ENCODE measurements at regions of chr3 and their contacts with region 1.

Region 1: DNA sequence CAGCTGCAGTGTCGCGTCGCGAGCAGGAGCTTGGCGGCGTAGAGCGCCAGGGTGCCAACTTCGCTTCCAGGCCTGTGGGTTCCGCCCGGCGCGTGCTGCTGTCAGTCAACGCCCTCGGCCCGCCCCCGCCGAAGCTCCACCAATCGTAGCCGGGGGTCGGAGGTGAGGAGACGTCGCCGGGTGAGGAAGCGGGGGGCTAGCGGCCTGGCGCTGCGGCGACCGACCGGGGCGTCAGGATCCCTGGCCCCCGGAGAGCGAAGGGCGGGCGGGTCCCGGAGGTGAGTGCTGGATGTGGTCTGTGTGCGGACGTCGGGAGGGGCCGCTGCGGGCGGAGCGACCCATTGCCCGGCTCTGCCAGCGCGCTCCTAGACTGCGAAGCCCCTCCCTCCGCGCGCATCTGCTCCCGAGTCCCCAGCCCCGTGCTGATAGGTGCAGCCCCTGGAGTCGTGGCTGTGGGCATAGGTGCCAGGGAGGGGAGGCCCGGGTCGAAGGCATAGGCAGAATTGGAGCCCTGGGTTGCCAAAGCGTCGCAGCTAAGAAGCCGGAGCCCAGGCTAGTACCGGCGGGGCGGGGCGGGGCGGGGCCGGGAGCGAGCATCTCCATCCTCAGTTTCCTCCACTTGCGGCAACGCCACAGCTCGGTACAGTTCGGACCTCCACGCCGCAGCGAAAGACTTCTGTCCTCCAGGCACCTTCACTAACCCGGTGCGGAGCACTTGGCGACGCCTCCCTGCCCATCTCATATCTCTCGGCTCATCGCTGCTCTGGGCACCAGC is at the start of gene NXPE3:
- DNase-seq: peak; percentile 92 to 95 (median 94)
- H3K4me3 ChIP-seq: peak within 1 kb of the TSS; percentile 63 to 90
- H3K4me3 Mint-ChIP-seq: peak within 1 kb of the TSS; percentile 89 to 98 (median 96)
- H3K27ac ChIP-seq: peak within 1 kb of the TSS; percentile 91
- H3K27ac Mint-ChIP-seq: peak within 1 kb of the TSS; percentile 97 to 99 (median 99)
- H3K4me1 ChIP-seq: peaks cover 49% of the 10 kb centered on the region
- H3K4me1 Mint-ChIP-seq: peaks cover 35 to 62% (median 47%) of the 10 kb centered on the region in 4 donors
- H3K27me3 ChIP-seq: no peaks in the 10 kb centered on the region
- H3K27me3 Mint-ChIP-seq: no peaks in the 10 kb centered on the region
- total RNA-seq, gene NXPE3: 35.7 to 37.2 TPM

Region 2: GRCh38 chr3:101676765-101677435 is 102.3 kb before region 1 on chr3 and contains the start of gene ZBTB11:
- CTCF ChIA-PET with region 1: no interaction called
- POLR2A ChIA-PET with region 1: interaction called, 26 read pairs
- intact Hi-C with region 1: loop called (anchors 1 kb)
- DNase-seq: peak; percentile 99 to 100 (median 99)
- H3K4me3 ChIP-seq: peak within 1 kb of the TSS; percentile 78 to 94
- H3K4me3 Mint-ChIP-seq: peak within 1 kb of the TSS; percentile 92 to 99 (median 96)
- H3K27ac ChIP-seq: peak within 1 kb of the TSS; percentile 98
- H3K27ac Mint-ChIP-seq: peak within 1 kb of the TSS; percentile 97 to 99 (median 98)
- H3K4me1 ChIP-seq: peaks cover 44% of the 10 kb centered on the region
- H3K4me1 Mint-ChIP-seq: peaks cover 23 to 73% (median 41%) of the 10 kb centered on the region in 4 donors
- H3K27me3 ChIP-seq: no peaks in the 10 kb centered on the region
- H3K27me3 Mint-ChIP-seq: peaks cover 0 to 2% of the 10 kb centered on the region in 2 donors
- total RNA-seq, gene ZBTB11: 48.9 to 50.8 TPM

Region 3: GRCh38 chr3:101695779-101696372 is 83.4 kb before region 1 on chr3:
- CTCF ChIA-PET with region 1: interaction called, 7 read pairs
- POLR2A ChIA-PET with region 1: interaction called, 3 read pairs
- intact Hi-C with region 1: loop called (anchors 2 kb)
- DNase-seq: peak; percentile 51 to 67 (median 58)
- H3K4me3 ChIP-seq: no peak overlapping the region
- H3K4me3 Mint-ChIP-seq: no peak overlapping the region
- H3K27ac ChIP-seq: no peak overlapping the region
- H3K27ac Mint-ChIP-seq: peak overlapping the region in 2 of 7 donors; percentile 74 to 77
- H3K4me1 ChIP-seq: peaks cover 3% of the 10 kb centered on the region
- H3K4me1 Mint-ChIP-seq: peaks cover 0 to 2% (median 1%) of the 10 kb centered on the region in 4 donors
- H3K27me3 ChIP-seq: no peaks in the 10 kb centered on the region
- H3K27me3 Mint-ChIP-seq: no peaks in the 10 kb centered on the region

Region 4: GRCh38 chr3:101791778-101792177 is 12.5 kb after region 1 on chr3:
- CTCF ChIA-PET with region 1: interaction called, 7 read pairs
- POLR2A ChIA-PET with region 1: interaction called, 13 read pairs
- intact Hi-C with region 1: no loop called
- DNase-seq: no peak
- H3K4me3 ChIP-seq: no peak overlapping the region
- H3K4me3 Mint-ChIP-seq: peak overlapping the region in 2 of 8 donors; percentile 10 to 55
- H3K27ac ChIP-seq: no peak overlapping the region
- H3K27ac Mint-ChIP-seq: peak overlapping the region in 4 of 7 donors; percentile 18 to 75 (median 48)
- H3K4me1 ChIP-seq: peaks cover 57% of the 10 kb centered on the region
- H3K4me1 Mint-ChIP-seq: peaks cover 47 to 78% (median 58%) of the 10 kb centered on the region in 4 donors
- H3K27me3 ChIP-seq: no peaks in the 10 kb centered on the region
- H3K27me3 Mint-ChIP-seq: no peaks in the 10 kb centered on the region

Region 5: DNA sequence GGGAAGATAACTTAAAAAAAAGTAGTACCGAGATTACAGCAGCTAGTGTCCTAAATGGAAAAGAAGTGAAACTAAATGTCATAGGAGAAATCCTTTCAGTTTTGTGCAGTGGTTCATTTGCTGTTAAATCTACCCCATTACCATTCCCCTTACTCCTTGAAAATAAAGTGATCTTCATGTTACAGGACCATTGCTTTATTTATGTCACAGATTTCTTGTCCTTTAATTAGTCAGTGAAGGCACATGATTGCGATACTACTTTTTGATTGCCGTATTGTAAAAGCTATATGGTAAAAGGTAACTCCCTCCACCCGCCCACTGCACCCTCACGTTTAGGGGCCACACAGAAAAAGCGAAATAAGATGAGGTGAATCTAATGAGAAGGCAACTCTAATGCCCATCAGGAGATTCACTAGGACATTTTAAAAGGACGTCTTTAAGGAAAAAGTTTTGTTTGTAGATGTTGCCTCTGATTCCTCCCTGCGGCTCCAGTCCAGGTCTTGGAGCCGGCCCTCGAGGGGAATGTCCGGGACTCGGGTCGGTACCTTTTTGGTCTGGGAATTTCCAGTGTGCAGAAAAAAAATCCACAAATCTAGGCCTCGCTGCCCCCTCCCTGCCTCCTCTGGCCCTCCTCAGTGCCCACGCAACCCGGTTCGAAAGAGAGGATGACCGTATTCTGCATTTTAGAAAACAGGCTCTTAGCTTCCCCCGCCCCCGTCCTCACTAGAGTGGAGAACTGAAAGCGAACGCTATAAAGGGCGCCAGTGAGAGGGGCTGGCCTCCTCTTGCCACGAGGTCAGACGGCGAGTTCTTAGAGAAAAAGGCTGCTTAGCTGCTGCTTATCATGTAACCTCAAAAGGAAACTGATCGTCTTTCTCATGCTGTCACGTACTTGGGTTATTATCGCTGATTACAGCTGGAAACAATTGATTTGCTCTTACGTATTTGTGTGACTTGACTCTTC is 48.3 kb after region 1 on chr3:
- CTCF ChIA-PET with region 1: no interaction called
- POLR2A ChIA-PET with region 1: interaction called, 13 read pairs
- intact Hi-C with region 1: no loop called
- DNase-seq: peak; percentile 76 to 92 (median 80)
- H3K4me3 ChIP-seq: peak overlapping the region; percentile 63 to 89
- H3K4me3 Mint-ChIP-seq: peak overlapping the region; percentile 89 to 98 (median 94)
- H3K27ac ChIP-seq: peak overlapping the region; percentile 92
- H3K27ac Mint-ChIP-seq: peak overlapping the region; percentile 96 to 100 (median 98)
- H3K4me1 ChIP-seq: peaks cover 40% of the 10 kb centered on the region
- H3K4me1 Mint-ChIP-seq: peaks cover 35 to 59% (median 44%) of the 10 kb centered on the region in 4 donors
- H3K27me3 ChIP-seq: no peaks in the 10 kb centered on the region
- H3K27me3 Mint-ChIP-seq: no peaks in the 10 kb centered on the region

Measured in CD4-positive, alpha-beta memory T cell (primary cell).